H1 (cell line): ENCODE measurements at regions of chr14 and their contacts with region 1.

Region 1: GRCh38 chr14:57692671-57693070 is 173.2 kb downstream of the SLC35F4 start:
- DNase-seq: no peak
- H3K4me3 ChIP-seq: no peak overlapping the region
- H3K27ac ChIP-seq: no peak overlapping the region
- H3K4me1 ChIP-seq: peaks cover 0 to 2% (median 0%) of the 10 kb centered on the region in 4 experiments; a peak in 1 of 7 replicates
- H3K27me3 ChIP-seq: no peaks in the 10 kb centered on the region
- CTCF ChIP-seq: peak in 2 of 3 experiments; percentile 43 to 58; a peak in 2 of 4 replicates
- EP300 ChIP-seq: no peak
- POLR2A ChIP-seq: no peak
- RAD21 ChIP-seq: peak; percentile 69 to 73

Region 2: DNA sequence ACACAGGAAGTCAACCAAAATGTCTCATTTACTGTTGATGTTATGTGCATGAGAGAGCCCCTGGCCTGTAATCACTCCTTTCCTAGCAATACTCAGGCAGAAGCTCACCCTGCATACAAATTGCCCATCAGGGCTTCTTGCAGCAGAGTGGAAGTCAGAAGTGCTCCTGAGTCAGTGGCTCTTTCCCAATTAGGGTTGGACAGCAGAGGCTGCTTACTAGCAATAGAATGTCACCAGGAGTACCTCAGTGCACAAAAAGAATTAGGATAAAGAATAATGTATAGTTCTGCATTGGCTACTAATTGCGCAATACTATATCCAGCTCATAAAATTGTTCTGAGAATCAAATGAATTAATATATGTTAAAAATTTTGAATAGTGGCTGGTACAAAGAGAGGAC is 12.1 kb after region 1 on chr14:
- CTCF ChIA-PET with region 1: interaction called, 16 read pairs
- POLR2A ChIA-PET with region 1: no interaction called
- DNase-seq: no peak
- H3K4me3 ChIP-seq: no peak overlapping the region
- H3K27ac ChIP-seq: no peak overlapping the region
- H3K4me1 ChIP-seq: no peaks in the 10 kb centered on the region
- H3K27me3 ChIP-seq: no peaks in the 10 kb centered on the region
- CTCF ChIP-seq: no peak
- EP300 ChIP-seq: no peak
- POLR2A ChIP-seq: no peak
- RAD21 ChIP-seq: no peak

Region 3: DNA sequence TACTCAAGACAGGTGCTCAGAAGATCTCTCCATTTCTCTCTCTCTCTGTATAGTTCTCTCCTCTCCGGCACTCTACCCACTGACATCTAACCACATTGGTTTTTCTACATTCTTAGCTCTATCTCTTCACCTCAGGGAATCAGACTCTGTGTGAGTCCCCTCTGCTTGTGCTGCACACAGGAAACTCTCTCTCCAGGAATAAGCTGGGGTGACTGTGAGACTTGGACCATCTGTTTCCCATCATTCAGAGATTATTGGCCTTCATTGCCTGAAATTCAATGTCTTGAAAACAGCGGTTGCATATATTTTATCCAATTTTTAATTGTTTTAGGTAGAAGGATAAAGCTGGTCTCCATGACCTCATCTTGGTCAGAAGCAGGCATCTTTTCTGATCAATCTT is 68.2 kb after region 1 on chr14:
- CTCF ChIA-PET with region 1: no interaction called
- POLR2A ChIA-PET with region 1: no interaction called
- DNase-seq: no peak
- H3K4me3 ChIP-seq: no peak overlapping the region
- H3K27ac ChIP-seq: no peak overlapping the region
- H3K4me1 ChIP-seq: peaks cover 0 to 3% (median 1%) of the 10 kb centered on the region in 4 experiments; a peak in 1 of 7 replicates
- H3K27me3 ChIP-seq: no peaks in the 10 kb centered on the region
- CTCF ChIP-seq: no peak
- EP300 ChIP-seq: no peak
- POLR2A ChIP-seq: no peak
- RAD21 ChIP-seq: no peak

Region 4: GRCh38 chr14:57865403-57866198 is 172.9 kb after region 1 on chr14 and contains the start of gene SLC35F4:
- CTCF ChIA-PET with region 1: interaction called, 12 read pairs
- POLR2A ChIA-PET with region 1: no interaction called
- DNase-seq: peak; percentile 64 to 97
- H3K4me3 ChIP-seq: peak within 1 kb of the TSS; percentile 43 to 72 (median 50)
- H3K27ac ChIP-seq: no peak within 1 kb of the TSS
- H3K4me1 ChIP-seq: peaks cover 0 to 3% (median 3%) of the 10 kb centered on the region in 4 experiments; a peak in 4 of 7 replicates
- H3K27me3 ChIP-seq: peaks cover 7 to 20% (median 19%) of the 10 kb centered on the region in 4 experiments
- CTCF ChIP-seq: peak in 1 of 3 experiments; percentile 12; a peak in 1 of 4 replicates
- EP300 ChIP-seq: peak in 1 of 2 experiments; percentile 77; a peak in 1 of 3 replicates
- POLR2A ChIP-seq: no peak
- RAD21 ChIP-seq: peak; percentile 2 to 27; a peak in 2 of 4 replicates
- total RNA-seq, gene SLC35F4: not detected in 2 replicates

Region 5: GRCh38 chr14:57962325-57963035 is 269.8 kb after region 1 on chr14:
- CTCF ChIA-PET with region 1: interaction called, 13 read pairs
- POLR2A ChIA-PET with region 1: no interaction called
- DNase-seq: peak; percentile 66 to 72
- H3K4me3 ChIP-seq: no peak overlapping the region
- H3K27ac ChIP-seq: no peak overlapping the region
- H3K4me1 ChIP-seq: peaks cover 0 to 6% (median 2%) of the 10 kb centered on the region in 4 experiments; a peak in 3 of 7 replicates
- H3K27me3 ChIP-seq: no peaks in the 10 kb centered on the region
- CTCF ChIP-seq: peak; percentile 37 to 78 (median 76)
- EP300 ChIP-seq: no peak
- POLR2A ChIP-seq: no peak
- RAD21 ChIP-seq: peak; percentile 90 to 91